GM12878 (cell line): ENCODE measurements at regions of chr12 and their contacts with region 1.

Region 1: GRCh38 chr12:12474931-12475795 is 87.5 kb downstream of the DUSP16 start:
- DNase-seq: peak; percentile 87
- ATAC-seq: peak; percentile 98
- H3K4me3 ChIP-seq: 0 out of 2 replicates have a peak overlapping the region, but pooled peaks have one; percentile 30
- H3K27ac ChIP-seq: peak overlapping the region; percentile 94
- H3K4me1 ChIP-seq: peaks cover 24% of the 10 kb centered on the region
- H3K27me3 ChIP-seq: no peaks in the 10 kb centered on the region
- CTCF ChIP-seq: peak in 1 of 3 experiments; percentile 19; a peak in 1 of 6 replicates
- EP300 ChIP-seq: peak; percentile 82 to 88; a peak in 3 of 4 replicates
- POLR2A ChIP-seq: no peak
- RAD21 ChIP-seq: peak; percentile 61

Region 2: DNA sequence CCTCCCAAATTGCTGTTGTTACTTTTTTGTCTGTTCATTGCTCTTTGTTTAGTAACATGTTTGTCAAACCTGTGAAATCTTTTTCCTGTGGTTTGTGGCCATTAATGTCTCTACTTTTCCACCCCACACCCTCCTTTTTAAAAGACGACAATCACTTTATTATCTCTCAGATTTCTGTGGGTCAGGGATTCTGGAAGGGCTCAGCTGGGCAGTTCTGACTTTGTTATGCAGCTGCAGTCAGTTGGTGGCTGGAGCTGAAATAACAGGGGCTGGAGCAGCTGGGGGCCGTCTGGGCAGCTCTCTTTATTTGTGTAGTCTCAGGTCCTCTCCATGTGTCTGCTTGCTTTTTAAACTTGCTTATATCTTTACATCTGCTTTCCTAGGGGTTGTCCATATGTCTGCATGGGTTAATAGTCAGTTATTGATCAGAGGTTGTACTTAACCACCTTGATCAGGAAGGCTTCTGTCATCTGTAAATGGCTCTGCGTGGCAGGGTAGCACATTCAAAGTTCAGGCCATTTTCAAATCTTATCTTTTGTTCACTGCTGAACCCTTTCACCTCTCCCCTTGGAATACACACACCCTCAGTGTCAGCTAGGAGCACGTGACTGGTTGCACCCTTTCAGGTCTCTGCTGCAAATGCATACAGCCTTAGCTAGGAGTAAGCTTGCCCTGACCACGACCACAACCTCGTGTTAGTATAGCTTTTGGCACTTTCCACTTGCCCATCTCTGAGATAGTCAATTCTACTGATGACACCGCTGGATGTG is 90.4 kb before region 1 on chr12:
- CTCF ChIA-PET with region 1: interaction called, 10 read pairs
- POLR2A ChIA-PET with region 1: interaction called, 6 read pairs
- RAD21 ChIA-PET with region 1: interaction called, 68 read pairs
- SMC1A ChIA-PET with region 1: interaction called, 75 read pairs
- in situ Hi-C with region 1: no loop called
- intact Hi-C with region 1: loop called (anchors 2 kb)
- DNase-seq: no peak
- ATAC-seq: peak; percentile 88
- H3K4me3 ChIP-seq: no peak overlapping the region
- H3K27ac ChIP-seq: no peak overlapping the region
- H3K4me1 ChIP-seq: peaks cover 7% of the 10 kb centered on the region
- H3K27me3 ChIP-seq: no peaks in the 10 kb centered on the region
- CTCF ChIP-seq: no peak
- EP300 ChIP-seq: 0 out of 4 replicates have a peak, but pooled peaks of 1 of the 2 experiments have one; percentile 11
- POLR2A ChIP-seq: no peak
- RAD21 ChIP-seq: no peak

Region 3: GRCh38 chr12:12398026-12398859 is 76.9 kb before region 1 on chr12:
- CTCF ChIA-PET with region 1: interaction called, 3 read pairs
- POLR2A ChIA-PET with region 1: no interaction called
- RAD21 ChIA-PET with region 1: interaction called, 11 read pairs
- SMC1A ChIA-PET with region 1: interaction called, 5 read pairs
- in situ Hi-C with region 1: no loop called
- intact Hi-C with region 1: no loop called
- DNase-seq: no peak
- ATAC-seq: no peak
- H3K4me3 ChIP-seq: no peak overlapping the region
- H3K27ac ChIP-seq: no peak overlapping the region
- H3K4me1 ChIP-seq: no peaks in the 10 kb centered on the region
- H3K27me3 ChIP-seq: no peaks in the 10 kb centered on the region
- CTCF ChIP-seq: no peak
- EP300 ChIP-seq: no peak
- POLR2A ChIP-seq: no peak
- RAD21 ChIP-seq: 0 out of 2 replicates have a peak, but pooled peaks have one; percentile 11

Region 4: GRCh38 chr12:12432364-12432763 is 42.8 kb before region 1 on chr12:
- CTCF ChIA-PET with region 1: interaction called, 3 read pairs
- POLR2A ChIA-PET with region 1: interaction called, 5 read pairs
- RAD21 ChIA-PET with region 1: interaction called, 12 read pairs
- SMC1A ChIA-PET with region 1: interaction called, 15 read pairs
- in situ Hi-C with region 1: no loop called
- intact Hi-C with region 1: no loop called
- DNase-seq: no peak
- ATAC-seq: no peak
- H3K4me3 ChIP-seq: no peak overlapping the region
- H3K27ac ChIP-seq: no peak overlapping the region
- H3K4me1 ChIP-seq: peaks cover 13% of the 10 kb centered on the region
- H3K27me3 ChIP-seq: no peaks in the 10 kb centered on the region
- CTCF ChIP-seq: no peak
- EP300 ChIP-seq: no peak
- POLR2A ChIP-seq: no peak
- RAD21 ChIP-seq: no peak

Region 5: DNA sequence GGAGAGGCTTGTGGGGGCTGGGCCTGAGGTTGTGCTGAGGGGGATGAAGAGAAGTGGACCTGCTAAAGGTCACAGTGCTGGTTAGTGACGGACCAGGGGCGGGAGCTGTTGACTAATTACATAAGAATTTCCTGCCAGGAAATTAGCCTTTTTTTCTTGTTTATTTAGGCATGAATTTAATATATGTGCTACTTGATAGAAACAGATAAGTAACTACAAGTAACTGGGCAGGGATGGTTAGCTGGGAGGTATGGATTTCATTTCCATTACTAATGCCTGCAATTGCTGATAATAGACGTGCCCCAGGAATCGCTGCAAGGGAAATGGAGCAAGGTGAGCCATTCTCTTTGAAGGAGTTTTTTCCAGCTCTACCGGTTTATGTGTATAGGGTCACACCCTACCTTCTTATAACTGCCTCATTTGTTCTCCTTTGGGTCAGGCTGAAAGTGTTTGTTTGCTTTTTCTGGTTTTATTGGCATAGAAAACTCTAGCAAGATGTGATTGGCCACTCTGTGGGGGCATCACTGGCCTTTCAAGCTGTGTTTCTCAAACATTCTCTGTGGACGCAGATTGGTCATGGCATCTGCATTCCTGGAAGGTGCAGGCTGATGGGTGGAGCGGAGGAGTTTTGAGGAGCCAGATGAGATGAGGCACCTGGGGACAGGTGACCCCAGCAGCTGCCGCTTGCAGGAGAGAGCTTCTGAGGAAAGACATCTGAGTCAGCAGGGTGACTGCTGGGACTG is 397.1 kb after region 1 on chr12:
- CTCF ChIA-PET with region 1: no interaction called
- POLR2A ChIA-PET with region 1: no interaction called
- RAD21 ChIA-PET with region 1: no interaction called
- SMC1A ChIA-PET with region 1: no interaction called
- in situ Hi-C with region 1: no loop called
- intact Hi-C with region 1: no loop called
- DNase-seq: no peak
- ATAC-seq: no peak
- H3K4me3 ChIP-seq: no peak overlapping the region
- H3K27ac ChIP-seq: no peak overlapping the region
- H3K4me1 ChIP-seq: peaks cover 5% of the 10 kb centered on the region
- H3K27me3 ChIP-seq: no peaks in the 10 kb centered on the region
- CTCF ChIP-seq: no peak
- EP300 ChIP-seq: no peak
- POLR2A ChIP-seq: no peak
- RAD21 ChIP-seq: no peak